Endothelial cell of umbilical vein (primary cell): ENCODE measurements at regions of chr10 and their contacts with region 1.

Region 1: GRCh38 chr10:130136226-130137089 is at the start of gene GLRX3:
- DNase-seq: peak; percentile 80
- H3K4me3 ChIP-seq: peak within 1 kb of the TSS; percentile 80 to 95 (median 83)
- H3K27ac ChIP-seq: peak within 1 kb of the TSS; percentile 57
- H3K4me1 ChIP-seq: peaks cover 19% of the 10 kb centered on the region
- H3K27me3 ChIP-seq: peaks cover 0 to 2% of the 10 kb centered on the region in 2 experiments
- CTCF ChIP-seq: no peak
- POLR2A ChIP-seq: peak; percentile 84
- total RNA-seq, gene GLRX3: 132 and 137 TPM in 2 replicates

Region 2: DNA sequence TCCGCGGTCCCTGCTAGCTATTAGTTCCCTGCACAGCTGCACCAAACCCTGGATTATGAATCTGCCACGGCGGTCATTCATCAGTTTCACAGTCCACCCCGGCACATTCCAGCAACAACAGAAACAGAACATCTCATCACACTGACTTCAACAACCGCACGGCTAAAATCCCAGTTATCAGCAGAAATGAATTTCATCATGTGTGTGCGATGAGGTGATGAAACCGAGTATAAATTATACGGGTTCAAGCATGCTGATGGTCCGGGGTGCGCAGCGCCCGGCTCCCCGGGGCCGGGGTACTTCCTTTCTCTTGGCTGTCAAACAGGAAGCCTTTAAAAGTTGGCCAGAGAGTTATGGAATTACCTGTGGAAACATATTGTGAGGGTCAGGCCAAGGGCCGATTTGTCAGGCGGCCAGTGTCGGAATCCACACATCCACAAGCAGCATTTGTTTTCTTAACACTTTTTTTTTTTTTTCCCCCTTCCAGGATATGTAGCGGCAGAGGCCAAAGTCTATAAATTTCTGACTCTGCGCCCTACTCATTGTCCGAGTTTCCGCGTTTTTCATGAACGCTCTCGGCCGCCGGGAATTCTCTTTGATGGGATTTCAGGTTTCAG is 1090.3 kb before region 1 on chr10:
- CTCF ChIA-PET with region 1: no interaction called
- POLR2A ChIA-PET with region 1: no interaction called
- dilution Hi-C with region 1: no loop called
- intact Hi-C with region 1: loop called (anchors 1 kb)
- DNase-seq: peak; percentile 92
- H3K4me3 ChIP-seq: peak overlapping the region in 2 of 3 experiments; percentile 27 to 71
- H3K27ac ChIP-seq: peak overlapping the region; percentile 100
- H3K4me1 ChIP-seq: peaks cover 61% of the 10 kb centered on the region
- H3K27me3 ChIP-seq: no peaks in the 10 kb centered on the region
- CTCF ChIP-seq: no peak
- POLR2A ChIP-seq: no peak

Region 3: GRCh38 chr10:130160765-130161164 is 24.3 kb after region 1 on chr10:
- CTCF ChIA-PET with region 1: interaction called, 3 read pairs
- POLR2A ChIA-PET with region 1: no interaction called
- dilution Hi-C with region 1: no loop called
- intact Hi-C with region 1: loop called (anchors 2 kb)
- DNase-seq: no peak
- H3K4me3 ChIP-seq: no peak overlapping the region
- H3K27ac ChIP-seq: no peak overlapping the region
- H3K4me1 ChIP-seq: peaks cover 2% of the 10 kb centered on the region
- H3K27me3 ChIP-seq: no peaks in the 10 kb centered on the region
- CTCF ChIP-seq: no peak
- POLR2A ChIP-seq: no peak